Dorsolateral prefrontal cortex (tissue), 120 donors: ENCODE measurements at regions of chr15 and their contacts with region 1.

Region 1: GRCh38 chr15:31488426-31489204 is 162.0 kb downstream of the KLF13 start:
- DNase-seq: peak in 4 of 10 donors; percentile 38 to 66 (median 55)
- H3K4me3 ChIP-seq: no peak overlapping the region
- H3K27ac ChIP-seq: peak overlapping the region in 50 of 59 donors; percentile 16 to 83 (median 64)
- H3K27me3 ChIP-seq: no peaks in the 10 kb centered on the region
- CTCF ChIP-seq: peak; percentile 80 to 99 (median 93)

Region 2: DNA sequence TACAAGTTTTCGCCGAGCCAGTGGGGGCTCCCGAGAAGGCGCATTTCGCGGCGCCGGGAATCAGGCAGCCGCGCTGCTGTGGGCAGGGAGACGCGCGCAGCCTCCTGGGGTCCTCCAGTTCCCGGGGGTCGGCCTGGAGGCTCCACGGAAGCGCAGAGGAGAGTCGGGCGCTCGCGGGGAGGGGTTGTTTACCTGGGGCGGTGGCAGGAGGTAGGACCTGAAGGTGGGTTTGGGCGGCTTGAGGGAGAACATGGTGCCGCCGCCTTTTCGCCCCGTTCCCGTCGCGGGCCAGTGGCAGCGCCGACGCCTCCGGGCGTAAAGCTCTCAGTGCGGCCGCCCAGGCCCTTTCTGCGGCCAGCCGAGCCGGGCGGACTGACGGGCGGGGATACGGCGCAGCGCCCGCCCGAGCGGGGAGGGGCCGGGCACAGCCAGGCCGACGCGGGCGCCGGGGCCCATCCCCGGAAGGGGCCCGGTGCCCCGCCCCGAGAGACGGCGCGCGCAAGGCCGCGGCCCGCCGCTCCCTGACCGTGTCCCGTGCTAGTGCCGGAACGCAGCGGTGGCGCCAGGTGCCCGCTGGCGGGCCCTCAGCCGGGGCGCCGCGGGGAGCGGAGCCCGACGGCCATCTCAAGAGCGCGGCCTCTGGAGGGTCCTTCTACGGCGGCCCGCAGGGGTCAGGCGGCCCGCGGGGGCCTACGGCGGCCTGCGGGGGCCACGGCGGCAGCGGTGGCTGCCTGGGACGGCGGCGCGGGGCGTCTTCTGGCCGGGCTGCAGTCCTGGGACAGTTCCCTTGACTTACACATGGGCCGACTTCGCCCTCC is 497.2 kb before region 1 on chr15 and contains the start of gene MTMR10:
- intact Hi-C with region 1: loop called in 1 of 2 experiments (anchors 10 kb)
- DNase-seq: peak; percentile 42 to 85 (median 57)
- H3K4me3 ChIP-seq: peak within 1 kb of the TSS; percentile 67 to 100 (median 94)
- H3K27ac ChIP-seq: peak within 1 kb of the TSS; percentile 77 to 99 (median 95)
- H3K27me3 ChIP-seq: no peaks in the 10 kb centered on the region
- CTCF ChIP-seq: peak in 22 of 56 donors; percentile 7 to 40 (median 18)
- total RNA-seq, gene MTMR10: 33.2 to 154 (median 67.8) TPM

Region 3: GRCh38 chr15:31200735-31201151 is 287.9 kb before region 1 on chr15:
- intact Hi-C with region 1: loop called (anchors 2 to 5 kb)
- DNase-seq: peak; percentile 48 to 88 (median 71)
- H3K4me3 ChIP-seq: no peak overlapping the region
- H3K27ac ChIP-seq: no peak overlapping the region
- H3K27me3 ChIP-seq: no peaks in the 10 kb centered on the region
- CTCF ChIP-seq: peak in 54 of 56 donors; percentile 14 to 71 (median 47)

Region 4: DNA sequence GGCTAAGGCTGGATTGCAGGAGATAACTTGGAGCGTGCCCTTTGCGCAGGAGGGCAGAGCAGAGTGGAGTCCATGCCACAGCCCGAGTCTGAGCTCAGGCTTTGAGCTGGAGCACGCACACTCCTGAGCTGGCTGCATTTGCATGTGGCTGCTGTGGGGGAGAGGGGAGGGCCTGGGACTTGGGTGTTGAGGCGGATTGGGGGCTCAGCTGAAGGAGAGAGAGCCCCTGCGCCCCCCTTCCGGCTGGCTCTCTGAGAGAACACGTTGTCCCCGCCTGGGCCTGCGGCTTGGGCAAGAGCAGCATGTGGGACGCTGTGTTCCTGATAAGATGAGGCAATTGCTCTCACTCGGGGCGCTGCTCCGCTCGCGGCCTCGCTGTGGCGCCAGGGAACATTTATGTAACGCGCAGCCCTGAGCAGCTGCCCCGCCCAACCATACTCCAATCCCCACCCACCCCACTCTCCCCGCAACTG is 122.9 kb before region 1 on chr15:
- intact Hi-C with region 1: loop called in 1 of 2 experiments (anchors 2 kb)
- DNase-seq: peak; percentile 91 to 98 (median 96)
- H3K4me3 ChIP-seq: peak overlapping the region in 56 of 59 donors; percentile 0 to 58 (median 40)
- H3K27ac ChIP-seq: peak overlapping the region; percentile 76 to 100 (median 94)
- H3K27me3 ChIP-seq: no peaks in the 10 kb centered on the region
- CTCF ChIP-seq: peak in 51 of 56 donors; percentile 19 to 63 (median 42)

Region 5: DNA sequence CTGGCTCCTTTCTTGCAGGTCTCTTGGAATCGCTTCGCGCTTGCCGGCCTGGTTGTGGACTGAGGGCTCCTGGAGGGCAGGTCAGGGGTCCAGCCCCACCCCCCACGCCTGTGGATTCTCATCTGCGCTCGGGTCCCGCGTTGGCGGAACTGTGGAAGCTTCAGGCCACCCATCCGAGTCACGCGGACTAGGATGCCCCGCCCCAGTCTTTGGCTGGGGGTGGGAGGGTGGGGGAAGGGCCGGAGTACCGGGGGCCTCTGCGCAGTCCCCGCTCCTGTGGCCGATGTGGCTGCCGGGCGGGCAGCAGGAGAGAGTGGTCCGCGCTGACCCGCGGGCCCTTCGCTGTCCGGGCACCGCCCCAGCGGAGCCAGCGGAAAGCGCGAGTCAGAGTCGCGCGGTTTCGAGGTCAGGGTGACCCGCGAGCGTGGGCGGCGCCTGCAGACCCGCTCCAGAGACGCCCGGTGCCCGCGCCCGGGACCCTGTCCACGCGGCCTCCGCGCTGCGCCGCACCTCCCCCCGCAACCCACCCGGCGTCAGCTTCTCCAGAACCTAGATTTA is 47.8 kb before region 1 on chr15:
- intact Hi-C with region 1: loop called in 1 of 2 experiments (anchors 2 kb)
- DNase-seq: peak in 5 of 10 donors; percentile 38 to 72 (median 47)
- H3K4me3 ChIP-seq: peak overlapping the region; percentile 51 to 88 (median 70)
- H3K27ac ChIP-seq: peak overlapping the region in 37 of 59 donors; percentile 4 to 83 (median 65)
- H3K27me3 ChIP-seq: no peaks in the 10 kb centered on the region
- CTCF ChIP-seq: no peak